ENCODE measurements at regions of chr1 and their contacts with region 1.

Region 1: DNA sequence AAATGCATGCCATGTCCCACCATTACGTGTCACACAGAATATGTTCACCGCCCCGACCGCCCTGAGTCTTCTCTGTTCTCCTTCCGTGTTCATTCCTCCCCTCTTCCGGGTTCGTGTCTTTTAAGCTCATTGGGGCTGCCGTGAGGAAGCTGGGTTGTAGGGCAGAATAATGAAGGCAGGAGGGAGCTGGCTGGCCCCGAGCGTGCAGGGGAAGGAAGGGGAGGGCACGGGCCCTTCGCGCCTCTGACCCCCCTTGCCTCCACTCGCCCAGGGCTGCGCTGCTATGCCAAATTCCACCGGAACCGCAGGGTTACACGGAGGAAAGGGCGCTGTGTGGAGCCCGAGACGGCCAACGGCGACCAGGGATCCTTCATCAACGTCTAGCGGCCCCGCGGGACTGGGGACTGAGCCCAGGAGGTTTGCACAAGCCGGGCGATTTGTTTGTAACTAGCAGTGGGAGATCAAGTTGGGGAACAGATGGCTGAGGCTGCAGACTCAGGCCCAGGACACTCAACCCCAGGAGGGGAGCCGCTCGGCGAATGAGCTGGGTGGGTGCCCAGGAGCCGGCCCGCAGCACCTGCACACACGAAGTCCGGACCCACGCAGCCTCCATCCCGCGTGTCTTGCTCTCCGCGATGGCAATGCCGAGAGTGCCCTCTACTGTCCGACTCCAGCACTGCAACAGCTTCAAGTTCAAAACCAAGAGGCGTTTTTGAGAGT is 16.5 kb upstream of the AGTRAP start:
- DNase-seq: peak; percentile 82
- H3K4me3 ChIP-seq: peak overlapping the region; percentile 21 to 36; a peak in 2 of 4 replicates
- H3K27ac ChIP-seq: no peak overlapping the region
- H3K4me1 ChIP-seq: peaks cover 0 to 4% of the 10 kb centered on the region in 2 experiments; a peak in 1 of 4 replicates
- H3K27me3 ChIP-seq: no peaks in the 10 kb centered on the region; the same call in 1 of the 2 replicates
- CTCF ChIP-seq: peak; percentile 98
- EP300 ChIP-seq: no peak
- RAD21 ChIP-seq: peak; percentile 93

Region 2: GRCh38 chr1:11654137-11654938 is 65.1 kb before region 1 on chr1 and contains the starts of genes FBXO2 and FBXO44:
- CTCF ChIA-PET with region 1: interaction called, 205 read pairs
- POLR2A ChIA-PET with region 1: interaction called, 5 read pairs
- DNase-seq: peak; percentile 89
- H3K4me3 ChIP-seq: peak within 1 kb of the TSS; percentile 61 to 69
- H3K27ac ChIP-seq: peak within 1 kb of the TSS in 1 of 2 experiments; percentile 43; a peak in 1 of 4 replicates
- H3K4me1 ChIP-seq: peaks cover 0 to 28% of the 10 kb centered on the region in 2 experiments; a peak in 1 of 4 replicates
- H3K27me3 ChIP-seq: no peaks in the 10 kb centered on the region
- CTCF ChIP-seq: no peak
- EP300 ChIP-seq: no peak
- RAD21 ChIP-seq: no peak
- polyA plus RNA-seq, gene FBXO2: 17.0 and 21.7 TPM in 2 replicates
- polyA plus RNA-seq, gene FBXO44: 42.8 and 52.2 TPM in 2 replicates

Region 3: DNA sequence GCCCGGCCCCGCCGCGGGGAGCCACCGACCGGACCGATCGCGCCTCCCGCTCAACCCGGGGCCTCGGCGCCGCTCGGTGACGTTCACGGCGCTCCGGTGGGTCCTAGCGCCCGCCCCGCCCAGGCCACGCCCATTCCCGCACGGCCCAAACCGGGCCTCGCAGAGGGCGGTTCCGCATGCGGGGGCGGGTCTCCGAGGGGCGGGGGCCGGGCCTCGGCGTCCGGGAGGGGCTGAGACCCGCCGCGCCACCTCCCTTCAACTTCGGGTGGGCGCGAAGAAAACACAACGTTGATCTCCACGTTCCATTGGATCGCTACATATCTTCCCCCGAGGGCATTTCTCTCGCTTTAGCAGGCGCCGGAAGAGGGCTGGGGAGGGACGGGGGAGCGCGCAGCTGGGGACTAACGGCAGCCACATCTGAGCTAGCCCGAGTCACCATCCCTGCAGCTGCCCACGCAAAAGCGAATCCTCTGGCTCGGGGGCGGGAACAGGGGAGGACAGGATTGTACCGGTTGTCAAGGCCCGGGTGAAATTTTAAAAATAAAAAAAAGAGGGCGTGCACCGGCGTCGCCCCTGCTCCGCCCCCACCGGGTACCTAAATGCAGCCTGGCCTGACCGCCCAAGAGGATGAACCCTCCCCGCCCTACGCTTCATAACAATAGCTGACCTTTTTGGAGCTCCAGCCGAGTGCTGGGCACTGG is 38.3 kb before region 1 on chr1 and contains the start of gene MAD2L2:
- CTCF ChIA-PET with region 1: interaction called, 51 read pairs
- POLR2A ChIA-PET with region 1: no interaction called
- DNase-seq: peak; percentile 97
- H3K4me3 ChIP-seq: peak within 1 kb of the TSS; percentile 90 to 96
- H3K27ac ChIP-seq: peak within 1 kb of the TSS; percentile 58 to 67
- H3K4me1 ChIP-seq: peaks cover 10 to 16% of the 10 kb centered on the region in 2 experiments; a peak in 2 of 4 replicates
- H3K27me3 ChIP-seq: no peaks in the 10 kb centered on the region
- CTCF ChIP-seq: no peak
- EP300 ChIP-seq: no peak
- RAD21 ChIP-seq: no peak
- polyA plus RNA-seq, gene MAD2L2: 70.0 and 94.0 TPM in 2 replicates

Region 4: DNA sequence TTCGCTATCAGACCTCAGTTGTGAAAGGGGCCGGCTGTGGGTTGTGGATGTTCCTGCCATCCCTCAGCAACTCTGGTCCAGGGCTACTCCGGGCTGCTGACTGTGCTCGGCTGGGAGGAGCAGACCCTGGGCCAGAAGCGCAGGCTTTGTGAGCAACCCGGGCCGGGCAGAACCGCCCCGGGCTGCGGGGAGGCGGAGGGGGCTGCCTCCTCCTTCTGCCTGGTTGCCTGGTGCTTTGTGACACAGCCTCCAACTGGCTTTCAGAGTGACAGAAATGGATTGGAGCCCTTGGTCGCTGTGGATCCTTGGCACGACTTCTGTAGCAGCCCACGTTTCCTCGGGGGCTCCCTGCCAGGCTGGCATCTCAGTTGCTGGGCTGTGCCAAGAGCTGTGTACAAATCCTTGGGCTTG is 17.9 kb before region 1 on chr1:
- CTCF ChIA-PET with region 1: interaction called, 90 read pairs
- POLR2A ChIA-PET with region 1: no interaction called
- DNase-seq: peak; percentile 75
- H3K4me3 ChIP-seq: no peak overlapping the region
- H3K27ac ChIP-seq: no peak overlapping the region
- H3K4me1 ChIP-seq: peaks cover 0 to 9% of the 10 kb centered on the region in 2 experiments; a peak in 1 of 4 replicates
- H3K27me3 ChIP-seq: no peaks in the 10 kb centered on the region; the same call in 1 of the 2 replicates
- CTCF ChIP-seq: no peak
- EP300 ChIP-seq: no peak
- RAD21 ChIP-seq: no peak

Region 5: GRCh38 chr1:11735854-11736745 is 16.6 kb after region 1 on chr1 and contains the start of gene AGTRAP:
- CTCF ChIA-PET with region 1: interaction called, 48 read pairs
- POLR2A ChIA-PET with region 1: no interaction called
- DNase-seq: peak; percentile 95
- H3K4me3 ChIP-seq: peak within 1 kb of the TSS; percentile 71 to 91
- H3K27ac ChIP-seq: peak within 1 kb of the TSS; percentile 43 to 56
- H3K4me1 ChIP-seq: peaks cover 0 to 16% of the 10 kb centered on the region in 2 experiments; a peak in 2 of 4 replicates
- H3K27me3 ChIP-seq: no peaks in the 10 kb centered on the region
- CTCF ChIP-seq: no peak
- EP300 ChIP-seq: no peak
- RAD21 ChIP-seq: no peak
- polyA plus RNA-seq, gene AGTRAP: 45.1 and 66.2 TPM in 2 replicates

Region 6: GRCh38 chr1:11759791-11760190 is 40.3 kb after region 1 on chr1:
- CTCF ChIA-PET with region 1: no interaction called
- POLR2A ChIA-PET with region 1: no interaction called
- DNase-seq: no peak
- H3K4me3 ChIP-seq: no peak overlapping the region
- H3K27ac ChIP-seq: no peak overlapping the region
- H3K4me1 ChIP-seq: peaks cover 0 to 9% of the 10 kb centered on the region in 2 experiments; a peak in 1 of 4 replicates
- H3K27me3 ChIP-seq: no peaks in the 10 kb centered on the region
- CTCF ChIP-seq: no peak
- EP300 ChIP-seq: no peak
- RAD21 ChIP-seq: no peak

Region 7: DNA sequence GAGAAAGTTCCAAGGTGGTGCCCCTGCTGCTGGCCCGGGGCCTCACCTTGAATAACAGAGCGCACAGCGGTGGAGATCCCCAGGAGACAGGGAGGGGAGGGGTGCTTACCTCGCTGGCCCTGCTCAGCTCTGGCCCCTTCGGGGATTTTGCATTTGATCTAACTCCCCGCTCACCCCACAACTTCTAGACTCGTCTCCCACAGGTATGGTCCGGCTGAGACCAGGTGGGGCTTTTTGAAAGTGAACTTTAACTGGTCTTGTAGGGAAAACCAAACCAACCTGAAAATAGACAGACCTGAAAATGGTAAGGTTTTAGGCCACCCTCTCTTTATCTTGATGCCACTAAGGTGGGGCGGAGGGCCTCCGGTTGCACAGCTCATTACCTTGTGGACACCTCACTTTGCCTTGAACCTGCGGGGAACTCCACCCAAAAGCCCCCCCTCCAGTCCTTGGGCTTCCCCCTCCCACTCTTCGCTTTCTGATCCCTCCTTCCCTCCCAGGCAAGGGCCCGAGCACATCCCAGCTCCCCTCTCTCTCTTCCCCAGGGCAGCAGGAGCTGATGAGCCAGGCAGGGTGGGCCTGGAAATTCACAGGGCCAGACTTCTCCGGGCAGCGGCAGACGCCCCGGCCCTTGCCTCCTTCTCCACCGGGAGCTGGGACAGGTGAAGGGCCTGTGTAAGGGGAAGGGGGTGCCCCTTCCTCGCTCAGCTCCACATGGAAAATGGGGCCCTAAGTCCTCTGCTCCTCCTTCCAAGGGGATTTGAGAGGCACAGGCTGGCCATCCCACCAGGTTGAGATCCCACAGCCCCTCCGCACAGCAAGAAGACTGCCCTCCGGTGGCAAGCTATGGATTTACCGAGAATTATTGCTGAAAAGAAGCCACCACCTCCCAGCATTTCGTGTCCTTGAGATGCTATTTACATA is 359.7 kb after region 1 on chr1:
- CTCF ChIA-PET with region 1: no interaction called
- POLR2A ChIA-PET with region 1: no interaction called
- DNase-seq: peak; percentile 74
- H3K4me3 ChIP-seq: no peak overlapping the region
- H3K27ac ChIP-seq: no peak overlapping the region
- H3K4me1 ChIP-seq: no peaks in the 10 kb centered on the region
- H3K27me3 ChIP-seq: no peaks in the 10 kb centered on the region
- CTCF ChIP-seq: peak; percentile 60
- EP300 ChIP-seq: no peak
- RAD21 ChIP-seq: peak; percentile 59